Caco-2 (cell line): ENCODE measurements at regions of chrX and their contacts with region 1.

Region 1: GRCh38 chrX:112760697-112761096 is 79.9 kb downstream of the AMOT start:
- DNase-seq: no peak
- H3K4me3 ChIP-seq: no peak overlapping the region
- H3K4me3 Mint-ChIP-seq: no peak overlapping the region
- H3K27ac Mint-ChIP-seq: no peak overlapping the region
- H3K4me1 ChIP-seq: no peaks in the 10 kb centered on the region
- H3K4me1 Mint-ChIP-seq: peaks cover 7% of the 10 kb centered on the region
- H3K27me3 ChIP-seq: no peaks in the 10 kb centered on the region
- H3K27me3 Mint-ChIP-seq: no peaks in the 10 kb centered on the region
- CTCF ChIP-seq: no peak

Region 2: DNA sequence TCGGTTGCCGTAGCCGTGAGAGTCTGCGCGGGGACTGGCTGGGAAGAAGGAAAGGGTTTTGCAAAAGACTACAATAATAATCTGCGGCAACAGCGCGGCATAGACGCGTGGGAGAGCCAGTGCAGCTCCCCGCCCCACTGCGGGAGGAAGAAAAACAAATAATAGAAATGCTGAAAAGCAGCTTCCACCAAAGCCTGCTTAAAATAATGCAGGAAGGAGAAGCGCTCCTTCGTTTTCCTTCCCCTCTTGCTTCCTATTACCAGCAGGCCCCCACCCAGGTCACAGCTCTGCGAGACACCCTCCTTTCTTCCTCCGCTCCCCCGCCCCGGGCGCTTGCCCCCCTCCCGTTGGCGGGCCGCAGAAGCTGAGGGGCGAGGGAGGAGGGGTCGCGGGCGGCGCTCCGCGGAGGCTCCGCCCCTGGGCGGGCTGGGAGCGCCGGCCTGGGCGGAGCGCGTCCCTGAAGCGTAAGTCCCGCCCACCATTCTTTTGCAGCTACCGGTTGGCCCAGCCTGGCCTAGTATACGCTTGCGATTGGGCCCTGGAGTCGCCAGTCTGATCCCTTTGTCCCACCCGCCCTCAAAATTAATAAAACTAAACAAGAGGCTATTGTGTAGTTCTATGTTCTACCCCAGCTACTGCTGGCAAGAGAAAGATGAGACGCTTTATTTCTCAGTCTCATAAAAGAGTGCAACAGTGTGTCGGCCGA is 80.6 kb after region 1 on chrX:
- CTCF ChIA-PET with region 1: no interaction called
- POLR2A ChIA-PET with region 1: no interaction called
- intact Hi-C with region 1: loop called (anchors 5 kb)
- DNase-seq: peak; percentile 86
- H3K4me3 ChIP-seq: peak overlapping the region; percentile 68
- H3K4me3 Mint-ChIP-seq: peak overlapping the region; percentile 96
- H3K27ac Mint-ChIP-seq: peak overlapping the region; percentile 91
- H3K4me1 ChIP-seq: peaks cover 25% of the 10 kb centered on the region
- H3K4me1 Mint-ChIP-seq: peaks cover 16% of the 10 kb centered on the region
- H3K27me3 ChIP-seq: no peaks in the 10 kb centered on the region
- H3K27me3 Mint-ChIP-seq: no peaks in the 10 kb centered on the region
- CTCF ChIP-seq: no peak

Region 3: GRCh38 chrX:112941209-112941788 is 180.6 kb after region 1 on chrX:
- CTCF ChIA-PET with region 1: no interaction called
- POLR2A ChIA-PET with region 1: no interaction called
- intact Hi-C with region 1: loop called (anchors 1 kb)
- DNase-seq: no peak
- H3K4me3 ChIP-seq: no peak overlapping the region
- H3K4me3 Mint-ChIP-seq: no peak overlapping the region
- H3K27ac Mint-ChIP-seq: no peak overlapping the region
- H3K4me1 ChIP-seq: no peaks in the 10 kb centered on the region
- H3K4me1 Mint-ChIP-seq: no peaks in the 10 kb centered on the region
- H3K27me3 ChIP-seq: no peaks in the 10 kb centered on the region
- H3K27me3 Mint-ChIP-seq: no peaks in the 10 kb centered on the region
- CTCF ChIP-seq: peak in 1 of 2 experiments; percentile 15